PC-3 (cell line): ENCODE measurements at regions of chr10 and their contacts with region 1.

Region 1: GRCh38 chr10:62268399-62269114 is at the start of gene RTKN2:
- DNase-seq: peak; percentile 100
- ATAC-seq: peak; percentile 81
- H3K4me3 ChIP-seq: peak within 1 kb of the TSS; percentile 75
- H3K27ac ChIP-seq: peak within 1 kb of the TSS; percentile 12
- H3K4me1 ChIP-seq: peaks cover 45% of the 10 kb centered on the region
- H3K27me3 ChIP-seq: no peaks in the 10 kb centered on the region
- CTCF ChIP-seq: no peak
- total RNA-seq, gene RTKN2: 24.8 and 26.6 TPM in 2 replicates

Region 2: GRCh38 chr10:61750929-61751471 is 517.6 kb before region 1 on chr10:
- CTCF ChIA-PET with region 1: interaction called, 10 read pairs
- POLR2A ChIA-PET with region 1: no interaction called
- intact Hi-C with region 1: no loop called
- DNase-seq: peak; percentile 98
- ATAC-seq: peak; percentile 83
- H3K4me3 ChIP-seq: no peak overlapping the region
- H3K27ac ChIP-seq: peak overlapping the region; percentile 48
- H3K4me1 ChIP-seq: peaks cover 26% of the 10 kb centered on the region
- H3K27me3 ChIP-seq: no peaks in the 10 kb centered on the region
- CTCF ChIP-seq: peak; percentile 100

Region 3: DNA sequence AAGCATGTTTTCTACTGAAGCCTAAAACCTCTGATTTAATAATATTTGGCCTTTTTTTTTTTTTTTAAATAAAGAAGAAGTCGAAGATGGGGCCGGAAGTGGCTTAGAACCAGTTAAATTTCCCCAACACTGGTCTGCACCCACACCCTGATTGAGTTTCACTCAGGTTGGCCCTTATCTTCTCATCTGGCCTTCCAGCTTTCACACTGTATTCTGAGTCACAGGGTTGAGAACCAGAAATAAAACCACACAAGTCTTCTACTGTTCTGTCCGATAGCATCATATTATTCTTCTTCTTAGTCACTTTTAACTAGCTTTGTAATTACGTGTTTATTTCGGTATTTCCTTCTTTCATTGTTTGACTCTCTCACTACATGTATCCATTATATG is 115.5 kb after region 1 on chr10:
- CTCF ChIA-PET with region 1: no interaction called
- POLR2A ChIA-PET with region 1: interaction called, 12 read pairs
- intact Hi-C with region 1: loop called (anchors 1 kb)
- DNase-seq: peak; percentile 100
- ATAC-seq: peak; percentile 74
- H3K4me3 ChIP-seq: peak overlapping the region; percentile 36
- H3K27ac ChIP-seq: peak overlapping the region; percentile 79
- H3K4me1 ChIP-seq: peaks cover 88% of the 10 kb centered on the region
- H3K27me3 ChIP-seq: no peaks in the 10 kb centered on the region
- CTCF ChIP-seq: no peak

Region 4: GRCh38 chr10:62422068-62422590 is 153.6 kb after region 1 on chr10:
- CTCF ChIA-PET with region 1: interaction called, 10 read pairs
- POLR2A ChIA-PET with region 1: interaction called, 16 read pairs
- intact Hi-C with region 1: loop called (anchors 1 kb)
- DNase-seq: peak; percentile 94
- ATAC-seq: peak; percentile 69
- H3K4me3 ChIP-seq: no peak overlapping the region
- H3K27ac ChIP-seq: peak overlapping the region; percentile 4
- H3K4me1 ChIP-seq: peaks cover 26% of the 10 kb centered on the region
- H3K27me3 ChIP-seq: no peaks in the 10 kb centered on the region
- CTCF ChIP-seq: peak; percentile 51; the same call in 1 of the 2 replicates

Region 5: DNA sequence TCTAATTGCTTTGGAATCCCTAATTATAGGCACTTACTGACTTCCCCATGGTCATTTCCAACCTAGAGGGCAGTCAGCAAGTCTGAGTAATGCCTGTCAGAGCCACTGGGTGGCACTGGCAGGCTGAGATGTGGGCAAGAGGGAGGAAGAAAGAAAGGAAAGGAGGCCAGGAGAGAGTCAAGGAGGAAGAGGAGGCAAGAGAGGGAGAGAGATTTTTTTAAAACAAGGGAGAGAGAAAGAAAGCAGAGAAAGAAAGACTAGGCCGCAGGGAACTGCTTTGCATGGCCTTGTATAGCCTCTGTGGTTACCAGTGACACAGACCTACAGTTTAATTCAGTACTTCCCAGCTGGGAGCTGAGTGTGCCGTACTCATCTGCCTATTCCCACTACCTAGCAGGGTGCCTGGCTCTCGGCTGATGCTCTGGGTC is 325.6 kb after region 1 on chr10:
- CTCF ChIA-PET with region 1: no interaction called
- POLR2A ChIA-PET with region 1: no interaction called
- intact Hi-C with region 1: loop called (anchors 5 kb)
- DNase-seq: peak; percentile 98
- ATAC-seq: peak; percentile 86
- H3K4me3 ChIP-seq: no peak overlapping the region
- H3K27ac ChIP-seq: no peak overlapping the region
- H3K4me1 ChIP-seq: peaks cover 11% of the 10 kb centered on the region
- H3K27me3 ChIP-seq: no peaks in the 10 kb centered on the region
- CTCF ChIP-seq: peak; percentile 100